Left ventricle myocardium superior (tissue), 1 donor: ENCODE measurements at regions of chr4 and their contacts with region 1.

Region 1: DNA sequence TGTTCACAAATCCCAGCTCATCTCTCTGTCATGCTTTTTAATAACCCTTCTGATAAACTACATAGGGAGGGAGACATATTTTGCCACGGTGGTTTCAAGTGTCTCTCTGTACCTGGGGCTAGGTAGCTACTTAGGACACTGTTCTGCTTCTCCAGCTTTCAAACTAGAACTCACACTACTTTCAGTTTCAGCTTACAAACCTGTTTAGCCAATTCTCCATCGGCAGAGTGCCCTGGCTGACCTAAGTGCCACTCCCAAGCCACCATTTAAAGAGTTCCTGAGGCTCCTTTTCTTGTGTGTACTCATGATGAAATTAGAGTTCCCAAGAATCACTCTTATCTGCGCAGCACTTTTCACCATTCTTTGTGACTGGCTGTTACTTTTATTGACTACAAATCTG is 899.2 kb downstream of the FAT4 start:
- DNase-seq: no peak
- ATAC-seq: no peak

Region 2: GRCh38 chr4:127249066-127249766 is 1035.2 kb after region 1 on chr4:
- intact Hi-C with region 1: loop called (anchors 10 kb)
- DNase-seq: no peak
- ATAC-seq: no peak